ENCODE measurements at regions of chr19 and their contacts with region 1.

Region 1: GRCh38 chr19:38831142-38831605 is 420 bp downstream of the ECH1 start:
- DNase-seq: peak; percentile 79

Region 2: GRCh38 chr19:38729653-38730469 is 101.3 kb before region 1 on chr19:
- intact Hi-C with region 1: loop called (anchors 5 kb)
- DNase-seq: no peak

Region 3: GRCh38 chr19:38849860-38850435 is 18.8 kb after region 1 on chr19 and contains the start of gene HNRNPL:
- intact Hi-C with region 1: loop called (anchors 2 kb)
- DNase-seq: peak; percentile 100
- total RNA-seq, gene HNRNPL: 136 TPM